ENCODE measurements at regions of chr6 and their contacts with region 1.

Region 1: DNA sequence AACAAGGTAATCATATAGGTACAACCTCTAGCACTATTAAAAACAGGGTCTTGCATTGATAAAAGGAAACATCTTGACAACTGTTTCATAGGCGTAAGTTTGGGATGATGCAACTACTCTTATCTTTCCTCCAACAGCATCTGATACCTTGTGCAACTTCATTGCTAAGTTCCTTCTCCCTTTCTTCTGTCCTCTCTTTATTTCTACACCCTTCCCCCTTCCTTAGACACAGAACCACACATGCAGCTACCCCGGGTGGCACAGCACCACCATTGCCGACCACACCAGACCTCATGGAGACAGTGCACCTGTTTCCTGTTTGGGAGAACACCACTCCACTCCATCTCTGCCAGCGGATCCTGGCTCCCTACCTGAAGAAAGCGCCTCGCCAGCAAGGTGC is 14.4 kb downstream of the MYB start:
- DNase-seq: no peak
- H3K4me3 Mint-ChIP-seq: no peak overlapping the region
- H3K27ac Mint-ChIP-seq: no peak overlapping the region
- H3K4me1 Mint-ChIP-seq: peaks cover 19% of the 10 kb centered on the region
- H3K27me3 Mint-ChIP-seq: no peaks in the 10 kb centered on the region

Region 2: DNA sequence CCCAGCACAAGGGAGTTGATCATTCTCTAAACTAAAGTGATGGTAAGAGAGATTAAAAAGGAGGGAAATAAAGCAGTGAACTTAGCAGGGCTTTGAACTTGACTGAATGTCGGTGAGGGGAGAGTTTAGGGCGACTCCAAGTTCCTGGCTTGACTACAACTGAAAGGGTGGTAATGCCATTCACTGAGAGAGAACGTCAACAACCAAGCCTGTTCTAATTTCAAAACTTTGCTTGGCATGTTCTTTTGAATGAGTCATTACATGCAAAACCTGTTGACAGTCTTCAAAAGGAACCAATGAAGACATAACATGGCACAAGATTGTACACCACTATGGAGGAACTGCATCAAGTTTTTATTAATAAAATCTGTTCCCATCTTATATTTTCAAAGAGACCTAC is 24.7 kb before region 1 on chr6:
- CTCF ChIA-PET with region 1: interaction called, 3 read pairs
- intact Hi-C with region 1: loop called (anchors 1 kb)
- DNase-seq: peak; percentile 65
- H3K4me3 Mint-ChIP-seq: no peak overlapping the region
- H3K27ac Mint-ChIP-seq: peak overlapping the region; percentile 88
- H3K4me1 Mint-ChIP-seq: peaks cover 17% of the 10 kb centered on the region
- H3K27me3 Mint-ChIP-seq: no peaks in the 10 kb centered on the region

Measured in activated naive CD4-positive, alpha-beta T cell treated with anti-CD3 and anti-CD28 coated beads for 36 hours (primary cell).